Activated CD8-positive, alpha-beta T cell treated with anti-CD3 and anti-CD28 coated beads for 36 hours (primary cell): ENCODE measurements at regions of chr17 and their contacts with region 1.

Region 1: DNA sequence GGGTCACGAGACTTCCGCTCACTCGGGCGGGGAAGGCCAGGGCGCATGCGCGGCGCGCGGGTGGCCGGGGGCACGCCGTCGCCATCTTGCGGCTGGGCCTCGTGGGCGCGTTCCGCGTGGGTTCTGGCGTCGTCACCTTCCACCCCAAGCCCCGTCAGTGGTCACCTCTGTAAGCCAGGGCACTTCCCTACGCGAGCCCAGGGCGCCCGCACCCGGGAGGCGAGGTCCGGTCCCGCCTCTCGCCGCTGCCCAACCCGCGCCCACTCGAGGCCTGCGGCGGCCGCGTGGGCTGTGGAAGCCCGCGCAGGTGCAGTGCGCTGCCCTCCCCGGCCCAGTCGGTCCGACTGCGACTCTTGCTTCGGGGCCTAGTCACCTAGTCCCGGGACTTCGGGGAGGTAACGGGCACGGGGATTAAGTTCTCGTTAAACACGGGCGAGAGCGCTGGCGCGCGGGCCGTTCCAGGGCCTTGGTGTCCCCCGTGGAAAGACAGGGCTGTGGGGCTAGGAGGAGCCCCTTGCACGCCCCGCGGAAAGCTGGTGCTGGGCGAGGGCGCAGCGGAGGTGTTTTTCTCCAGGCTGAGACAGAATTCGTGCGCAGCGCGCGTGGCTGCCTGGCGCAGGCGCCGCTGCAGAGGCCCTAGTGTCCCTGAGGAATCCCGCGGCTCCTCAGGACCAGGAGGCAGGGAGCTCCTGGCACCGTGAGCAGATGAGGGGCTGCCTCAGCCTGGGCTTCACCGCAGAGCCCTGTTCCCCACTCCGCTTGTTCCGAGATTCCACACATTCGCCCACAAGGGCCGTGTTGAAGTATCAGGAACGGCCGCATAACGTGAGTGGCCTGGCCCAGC is 472 bp upstream of the ARHGDIA start:
- DNase-seq: peak; percentile 96
- ATAC-seq: no peak
- H3K4me3 Mint-ChIP-seq: peak overlapping the region; percentile 84
- H3K27ac Mint-ChIP-seq: peak overlapping the region; percentile 94
- H3K4me1 Mint-ChIP-seq: peaks cover 36% of the 10 kb centered on the region
- H3K27me3 Mint-ChIP-seq: no peaks in the 10 kb centered on the region
- CTCF ChIP-seq: no peak

Region 2: DNA sequence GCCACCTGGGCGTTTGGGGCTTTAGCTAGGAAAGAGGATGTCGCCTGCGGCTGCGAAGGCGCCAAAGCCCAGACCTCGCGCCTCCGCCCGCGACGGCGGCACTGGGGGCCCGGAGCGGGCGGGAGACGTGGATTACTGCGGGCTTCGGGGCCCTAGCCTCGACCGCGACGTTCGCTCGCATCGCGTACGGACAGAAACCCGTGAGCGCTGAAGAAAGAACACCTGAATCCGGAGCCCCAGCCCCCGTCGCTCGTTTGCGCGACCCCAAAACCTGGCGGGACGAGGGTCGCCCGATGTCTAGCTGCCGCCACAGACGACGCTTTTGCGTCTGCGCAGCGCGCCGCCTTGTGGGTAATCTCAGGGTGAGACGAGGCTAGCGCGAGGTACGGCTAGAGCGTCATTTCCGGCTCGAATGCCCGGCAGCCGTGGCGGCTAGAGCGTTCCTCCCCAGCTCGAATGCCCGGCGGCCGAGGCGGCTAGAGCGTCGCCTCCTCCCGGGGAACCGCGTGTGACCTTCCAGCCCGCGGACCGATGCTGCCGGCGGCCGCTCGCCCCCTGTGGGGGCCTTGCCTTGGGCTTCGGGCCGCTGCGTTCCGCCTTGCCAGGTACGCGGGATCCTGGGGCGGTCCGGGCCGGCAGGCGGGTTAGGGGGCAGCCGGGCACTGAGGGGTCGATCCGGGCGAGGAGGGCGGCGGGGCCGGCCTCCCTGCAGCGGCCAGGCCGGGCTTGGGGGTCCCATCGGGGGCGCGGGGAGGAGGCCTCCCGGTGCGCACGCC is 168.4 kb before region 1 on chr17 and contains the start of gene MRPL12:
- CTCF ChIA-PET with region 1: interaction called, 5 read pairs
- POLR2A ChIA-PET with region 1: interaction called, 23 read pairs
- intact Hi-C with region 1: no loop called
- DNase-seq: peak; percentile 94
- ATAC-seq: peak; percentile 88
- H3K4me3 Mint-ChIP-seq: peak within 1 kb of the TSS; percentile 94
- H3K27ac Mint-ChIP-seq: peak within 1 kb of the TSS; percentile 96
- H3K4me1 Mint-ChIP-seq: peaks cover 24% of the 10 kb centered on the region
- H3K27me3 Mint-ChIP-seq: no peaks in the 10 kb centered on the region
- CTCF ChIP-seq: no peak
- total RNA-seq, gene MRPL12: 149 to 152 TPM

Region 3: DNA sequence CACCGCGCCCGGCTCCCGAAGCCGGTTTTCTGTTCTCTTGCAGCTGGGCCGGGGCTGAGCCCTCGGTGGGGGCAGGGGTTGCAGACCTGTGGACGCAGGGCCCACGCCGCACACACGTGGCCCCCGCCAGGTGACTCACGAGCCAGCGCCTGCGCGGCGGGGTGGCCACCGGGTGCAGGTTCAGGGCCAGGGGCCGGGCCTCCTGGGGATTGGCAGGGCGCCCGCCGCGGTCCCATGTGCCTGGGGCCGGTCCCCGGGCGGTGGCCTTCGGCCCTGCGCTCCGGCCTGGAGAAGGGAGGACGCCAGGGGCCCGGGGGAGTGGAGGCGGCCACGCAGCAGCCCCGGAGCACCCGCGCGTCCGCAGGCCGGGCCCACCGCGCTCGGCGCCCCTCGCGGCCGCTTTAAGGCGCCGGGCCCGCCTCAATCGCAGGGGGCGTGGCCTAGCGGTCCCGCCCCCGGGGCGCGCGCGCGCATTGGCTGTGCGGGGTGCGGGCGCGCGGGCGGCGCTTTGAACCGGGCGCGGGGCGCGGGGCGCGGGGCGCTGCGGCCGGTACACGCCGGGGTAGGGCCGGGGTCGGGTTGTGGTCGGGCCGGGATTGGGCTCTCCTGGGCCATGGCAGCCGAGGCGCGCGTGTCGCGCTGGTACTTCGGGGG is 159.7 kb before region 1 on chr17 and contains the start of gene SLC25A10:
- CTCF ChIA-PET with region 1: no interaction called
- POLR2A ChIA-PET with region 1: interaction called, 23 read pairs
- intact Hi-C with region 1: no loop called
- DNase-seq: peak; percentile 88
- ATAC-seq: peak; percentile 85
- H3K4me3 Mint-ChIP-seq: peak within 1 kb of the TSS; percentile 92
- H3K27ac Mint-ChIP-seq: peak within 1 kb of the TSS; percentile 83
- H3K4me1 Mint-ChIP-seq: peaks cover 24% of the 10 kb centered on the region
- H3K27me3 Mint-ChIP-seq: no peaks in the 10 kb centered on the region
- CTCF ChIP-seq: peak; percentile 11
- total RNA-seq, gene SLC25A10: 29.4 to 30.5 TPM

Region 4: DNA sequence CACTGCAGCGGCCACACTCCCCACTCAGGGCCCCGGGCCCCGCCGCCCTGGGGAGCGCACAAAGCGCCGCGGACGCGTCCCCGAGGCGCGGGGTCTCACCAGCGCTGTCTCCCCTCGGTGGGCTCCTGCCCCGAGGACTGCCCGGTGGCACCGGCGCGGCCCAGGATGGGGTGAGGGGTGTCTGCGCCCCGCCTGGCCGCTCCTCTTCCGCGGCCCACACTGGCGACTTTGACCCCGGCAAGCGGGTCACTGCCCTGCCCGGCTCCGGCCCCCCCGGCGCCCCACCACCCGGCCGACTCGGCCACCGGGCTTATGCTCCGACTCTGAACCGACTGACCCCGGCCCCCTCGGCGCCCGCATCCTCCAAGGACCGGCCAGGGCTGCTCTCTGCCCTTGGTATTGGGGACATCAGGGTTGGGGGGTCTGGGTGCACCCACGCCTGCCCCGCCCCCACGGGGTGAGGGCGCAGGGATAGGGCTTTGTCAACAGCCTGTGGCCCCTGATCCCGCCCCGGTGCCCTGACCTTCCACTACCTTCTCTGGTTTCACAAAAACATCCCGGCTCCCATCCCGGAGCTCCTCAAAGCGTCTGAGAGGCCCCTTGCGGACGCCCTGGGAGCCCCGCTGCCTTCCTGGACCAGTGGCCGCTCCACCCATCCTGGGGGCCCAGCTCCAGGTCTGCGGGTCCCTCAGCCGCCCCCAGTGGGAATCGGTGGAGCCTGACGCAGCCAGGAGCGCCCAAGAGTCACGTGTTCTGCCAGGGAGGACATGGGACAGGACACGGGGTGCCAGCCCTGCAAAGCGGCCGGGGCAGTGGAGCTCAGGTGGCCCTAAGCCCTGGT is 66.8 kb before region 1 on chr17:
- CTCF ChIA-PET with region 1: no interaction called
- POLR2A ChIA-PET with region 1: no interaction called
- intact Hi-C with region 1: no loop called
- DNase-seq: no peak
- ATAC-seq: no peak
- H3K4me3 Mint-ChIP-seq: no peak overlapping the region
- H3K27ac Mint-ChIP-seq: no peak overlapping the region
- H3K4me1 Mint-ChIP-seq: no peaks in the 10 kb centered on the region
- H3K27me3 Mint-ChIP-seq: peaks cover 36% of the 10 kb centered on the region
- CTCF ChIP-seq: no peak

Region 5: DNA sequence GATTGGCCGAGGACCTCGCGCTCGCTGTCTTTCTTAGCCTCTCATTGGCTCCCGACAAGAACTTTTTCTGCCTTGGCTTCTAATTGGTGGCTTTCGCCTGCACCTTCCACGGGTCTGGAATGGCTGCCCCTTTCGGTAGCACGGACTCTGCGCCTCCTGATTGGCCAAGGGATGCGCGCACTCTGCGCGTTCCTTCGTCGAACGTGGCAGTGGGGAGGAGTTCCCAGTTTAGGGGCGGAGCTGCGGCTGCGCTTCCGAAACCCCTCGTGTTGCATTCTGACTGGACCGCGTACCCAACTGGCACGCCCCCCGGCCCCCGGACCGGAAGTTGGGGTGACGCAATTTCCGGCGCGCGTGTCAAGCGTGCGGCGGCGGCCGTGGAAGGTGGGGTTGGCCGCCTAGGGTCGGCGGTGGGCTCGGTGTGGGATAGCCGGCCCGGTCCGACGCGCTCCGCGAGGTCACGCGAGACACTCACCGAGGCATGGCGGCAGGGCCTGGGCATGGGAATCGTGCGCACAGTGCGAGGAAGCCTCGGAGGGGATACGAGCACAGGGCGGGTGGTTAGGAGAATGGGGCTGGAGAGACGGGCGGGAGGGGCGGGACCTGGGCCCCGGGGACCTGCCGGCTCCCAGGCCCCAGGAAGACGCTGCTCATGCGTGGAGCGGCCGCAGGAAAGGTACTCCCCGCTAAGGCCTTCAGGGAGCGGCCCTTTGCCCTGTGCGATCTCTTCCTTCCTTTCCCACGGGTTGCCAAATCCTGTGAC is 10.7 kb before region 1 on chr17:
- CTCF ChIA-PET with region 1: interaction called, 10 read pairs
- POLR2A ChIA-PET with region 1: interaction called, 38 read pairs
- intact Hi-C with region 1: no loop called
- DNase-seq: peak; percentile 99
- ATAC-seq: peak; percentile 92
- H3K4me3 Mint-ChIP-seq: peak overlapping the region; percentile 96
- H3K27ac Mint-ChIP-seq: peak overlapping the region; percentile 98
- H3K4me1 Mint-ChIP-seq: peaks cover 44% of the 10 kb centered on the region
- H3K27me3 Mint-ChIP-seq: no peaks in the 10 kb centered on the region
- CTCF ChIP-seq: no peak

Region 6: DNA sequence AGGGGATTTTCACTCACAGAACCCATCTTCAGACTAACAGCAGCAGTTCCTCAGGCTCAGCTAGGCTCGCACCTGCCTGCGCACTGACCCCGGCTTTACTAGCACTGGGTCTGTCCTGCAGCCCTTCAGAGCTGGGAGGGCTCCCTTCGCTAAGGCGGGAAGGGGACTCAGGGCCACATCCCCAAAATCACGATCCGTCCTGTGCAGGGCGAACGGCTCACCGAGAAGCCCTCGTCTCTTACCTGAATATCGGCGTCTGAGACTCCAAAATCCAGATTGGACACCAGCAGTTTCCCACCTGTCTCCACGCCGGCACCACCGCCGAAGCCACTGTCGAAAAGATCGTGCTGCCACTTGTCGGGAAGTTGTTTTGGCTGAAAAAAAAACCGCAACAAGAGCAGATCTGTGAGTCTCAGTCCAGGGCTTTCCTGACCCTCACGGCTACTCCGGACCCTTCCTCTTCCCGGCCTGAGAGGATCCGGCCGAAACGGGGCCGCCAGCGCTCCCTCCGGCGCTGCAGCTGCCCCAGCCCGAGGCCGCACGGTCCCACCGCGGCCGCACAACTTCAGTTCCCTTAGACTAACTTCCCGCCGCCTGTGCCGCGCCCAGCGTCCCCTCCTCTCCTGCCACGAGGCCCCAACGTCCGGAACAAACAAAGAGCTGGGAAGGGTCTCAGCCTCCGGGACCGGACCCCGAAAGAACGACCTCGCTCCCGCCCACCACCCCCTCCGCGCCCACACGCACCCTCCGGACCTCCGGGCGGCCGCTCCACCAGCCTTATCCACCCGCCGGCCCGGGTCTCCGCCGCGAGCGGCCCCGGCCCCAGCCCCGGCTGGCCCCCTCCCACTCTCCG is 19.1 kb after region 1 on chr17:
- CTCF ChIA-PET with region 1: interaction called, 3 read pairs
- POLR2A ChIA-PET with region 1: interaction called, 73 read pairs
- intact Hi-C with region 1: no loop called
- DNase-seq: peak; percentile 41
- ATAC-seq: no peak
- H3K4me3 Mint-ChIP-seq: peak overlapping the region; percentile 85
- H3K27ac Mint-ChIP-seq: peak overlapping the region; percentile 94
- H3K4me1 Mint-ChIP-seq: peaks cover 15% of the 10 kb centered on the region
- H3K27me3 Mint-ChIP-seq: no peaks in the 10 kb centered on the region
- CTCF ChIP-seq: no peak

Region 7: GRCh38 chr17:81934850-81935708 is 63.5 kb after region 1 on chr17:
- CTCF ChIA-PET with region 1: interaction called, 4 read pairs
- POLR2A ChIA-PET with region 1: interaction called, 10 read pairs
- intact Hi-C with region 1: no loop called
- DNase-seq: no peak
- ATAC-seq: no peak
- H3K4me3 Mint-ChIP-seq: peak overlapping the region; percentile 88
- H3K27ac Mint-ChIP-seq: no peak overlapping the region
- H3K4me1 Mint-ChIP-seq: peaks cover 41% of the 10 kb centered on the region
- H3K27me3 Mint-ChIP-seq: no peaks in the 10 kb centered on the region
- CTCF ChIP-seq: no peak

Region 8: GRCh38 chr17:82003411-82004381 is 132.1 kb after region 1 on chr17:
- CTCF ChIA-PET with region 1: no interaction called
- POLR2A ChIA-PET with region 1: no interaction called
- intact Hi-C with region 1: no loop called
- DNase-seq: peak; percentile 23
- ATAC-seq: peak; percentile 59
- H3K4me3 Mint-ChIP-seq: no peak overlapping the region
- H3K27ac Mint-ChIP-seq: no peak overlapping the region
- H3K4me1 Mint-ChIP-seq: no peaks in the 10 kb centered on the region
- H3K27me3 Mint-ChIP-seq: no peaks in the 10 kb centered on the region
- CTCF ChIP-seq: no peak